OCI-LY7 (cell line): ENCODE measurements at regions of chr9 and their contacts with region 1.

Region 1: GRCh38 chr9:22469928-22470544 is 23.4 kb downstream of the DMRTA1 start:
- DNase-seq: peak; percentile 88
- H3K4me3 ChIP-seq: no peak overlapping the region
- H3K27ac ChIP-seq: no peak overlapping the region
- H3K4me1 ChIP-seq: peaks cover 45% of the 10 kb centered on the region
- CTCF ChIP-seq: peak; percentile 98

Region 2: GRCh38 chr9:22512495-22512894 is 42.5 kb after region 1 on chr9:
- CTCF ChIA-PET with region 1: no interaction called
- POLR2A ChIA-PET with region 1: interaction called, 4 read pairs
- intact Hi-C with region 1: loop called (anchors 5 kb)
- DNase-seq: peak; percentile 95
- H3K4me3 ChIP-seq: peak overlapping the region; percentile 19
- H3K27ac ChIP-seq: peak overlapping the region; percentile 94
- H3K4me1 ChIP-seq: peaks cover 66% of the 10 kb centered on the region
- CTCF ChIP-seq: no peak

Region 3: GRCh38 chr9:22528485-22528884 is 58.4 kb after region 1 on chr9:
- CTCF ChIA-PET with region 1: interaction called, 7 read pairs
- POLR2A ChIA-PET with region 1: interaction called, 5 read pairs
- intact Hi-C with region 1: loop called (anchors 1 kb)
- DNase-seq: peak; percentile 77
- H3K4me3 ChIP-seq: peak overlapping the region; percentile 31
- H3K27ac ChIP-seq: peak overlapping the region; percentile 6
- H3K4me1 ChIP-seq: peaks cover 51% of the 10 kb centered on the region
- CTCF ChIP-seq: peak; percentile 94

Region 4: GRCh38 chr9:22718653-22719052 is 248.6 kb after region 1 on chr9:
- CTCF ChIA-PET with region 1: interaction called, 3 read pairs
- POLR2A ChIA-PET with region 1: no interaction called
- intact Hi-C with region 1: loop called (anchors 1 kb)
- DNase-seq: no peak
- H3K4me3 ChIP-seq: no peak overlapping the region
- H3K27ac ChIP-seq: no peak overlapping the region
- H3K4me1 ChIP-seq: no peaks in the 10 kb centered on the region
- CTCF ChIP-seq: peak; percentile 74

Region 5: DNA sequence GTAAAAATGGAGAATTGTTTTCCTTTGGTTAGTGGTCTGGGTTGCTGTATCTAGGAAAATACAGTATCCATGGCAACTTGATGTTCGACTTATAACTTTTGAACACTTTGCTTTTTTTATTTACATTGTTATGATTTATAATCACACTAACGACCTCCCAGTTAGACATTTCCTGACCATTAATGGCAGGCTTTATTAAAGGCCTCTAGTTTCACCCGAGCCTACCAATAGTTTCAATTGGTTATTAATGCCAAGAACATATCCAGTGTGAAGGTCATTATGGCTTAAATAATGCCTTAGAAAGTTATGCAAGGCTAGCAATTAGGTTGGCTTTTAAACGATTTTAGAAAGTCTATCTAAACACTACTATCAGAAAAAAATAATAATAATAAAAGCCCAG is 428.6 kb after region 1 on chr9:
- CTCF ChIA-PET with region 1: no interaction called
- POLR2A ChIA-PET with region 1: interaction called, 3 read pairs
- intact Hi-C with region 1: loop called (anchors 10 kb)
- DNase-seq: no peak
- H3K4me3 ChIP-seq: no peak overlapping the region
- H3K27ac ChIP-seq: no peak overlapping the region
- H3K4me1 ChIP-seq: no peaks in the 10 kb centered on the region
- CTCF ChIP-seq: no peak